Endothelial cell of umbilical vein (primary cell): ENCODE measurements at regions of chr16 and their contacts with region 1.

Region 1: GRCh38 chr16:75110637-75111513 is 5.7 kb downstream of the LDHD start:
- DNase-seq: peak; percentile 85
- H3K4me3 ChIP-seq: no peak overlapping the region
- H3K27ac ChIP-seq: no peak overlapping the region
- H3K4me1 ChIP-seq: peaks cover 12% of the 10 kb centered on the region
- H3K27me3 ChIP-seq: no peaks in the 10 kb centered on the region
- CTCF ChIP-seq: peak; percentile 87 to 95
- POLR2A ChIP-seq: no peak

Region 2: DNA sequence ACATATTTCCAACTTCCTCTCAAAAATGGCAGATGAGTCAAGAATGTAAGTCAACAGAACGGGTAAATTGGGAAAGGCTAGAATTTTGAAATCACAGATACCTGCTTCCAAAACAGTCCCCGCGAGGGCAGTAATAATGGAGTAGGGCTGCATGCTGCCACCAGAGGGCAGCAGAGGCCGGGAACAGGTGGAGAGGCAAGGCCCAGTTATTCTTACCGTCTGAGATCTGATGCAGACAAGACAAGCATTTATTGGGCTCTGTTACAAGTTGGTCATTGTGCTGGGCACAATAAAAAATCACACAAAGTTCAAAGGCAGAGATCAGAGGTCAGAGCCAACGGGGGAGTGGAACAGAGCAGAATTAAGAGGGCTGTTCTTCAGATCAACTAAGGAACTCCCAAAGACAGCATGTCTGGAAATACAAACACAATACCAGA is 401.4 kb before region 1 on chr16:
- CTCF ChIA-PET with region 1: no interaction called
- POLR2A ChIA-PET with region 1: no interaction called
- dilution Hi-C with region 1: no loop called
- intact Hi-C with region 1: loop called (anchors 1 kb)
- DNase-seq: peak; percentile 82
- H3K4me3 ChIP-seq: no peak overlapping the region
- H3K27ac ChIP-seq: no peak overlapping the region
- H3K4me1 ChIP-seq: no peaks in the 10 kb centered on the region
- H3K27me3 ChIP-seq: no peaks in the 10 kb centered on the region
- CTCF ChIP-seq: peak; percentile 94 to 96
- POLR2A ChIP-seq: no peak

Region 3: GRCh38 chr16:74862741-74863244 is 248.1 kb before region 1 on chr16:
- CTCF ChIA-PET with region 1: interaction called, 22 read pairs
- POLR2A ChIA-PET with region 1: no interaction called
- dilution Hi-C with region 1: no loop called
- intact Hi-C with region 1: no loop called
- DNase-seq: peak; percentile 61
- H3K4me3 ChIP-seq: no peak overlapping the region
- H3K27ac ChIP-seq: no peak overlapping the region
- H3K4me1 ChIP-seq: peaks cover 3% of the 10 kb centered on the region
- H3K27me3 ChIP-seq: peaks cover 0 to 1% of the 10 kb centered on the region in 2 experiments
- CTCF ChIP-seq: peak; percentile 54 to 59
- POLR2A ChIP-seq: no peak

Region 4: GRCh38 chr16:74936902-74937560 is 173.8 kb before region 1 on chr16:
- CTCF ChIA-PET with region 1: interaction called, 10 read pairs
- POLR2A ChIA-PET with region 1: no interaction called
- dilution Hi-C with region 1: no loop called
- intact Hi-C with region 1: no loop called
- DNase-seq: no peak
- H3K4me3 ChIP-seq: no peak overlapping the region
- H3K27ac ChIP-seq: no peak overlapping the region
- H3K4me1 ChIP-seq: no peaks in the 10 kb centered on the region
- H3K27me3 ChIP-seq: no peaks in the 10 kb centered on the region
- CTCF ChIP-seq: no peak
- POLR2A ChIP-seq: no peak

Region 5: GRCh38 chr16:74991593-74992403 is 119.1 kb before region 1 on chr16:
- CTCF ChIA-PET with region 1: interaction called, 317 read pairs
- POLR2A ChIA-PET with region 1: no interaction called
- dilution Hi-C with region 1: no loop called
- intact Hi-C with region 1: no loop called
- DNase-seq: no peak
- H3K4me3 ChIP-seq: no peak overlapping the region
- H3K27ac ChIP-seq: no peak overlapping the region
- H3K4me1 ChIP-seq: no peaks in the 10 kb centered on the region
- H3K27me3 ChIP-seq: peaks cover 0 to 4% of the 10 kb centered on the region in 2 experiments
- CTCF ChIP-seq: no peak
- POLR2A ChIP-seq: no peak

Region 6: GRCh38 chr16:75011634-75012307 is 99.1 kb before region 1 on chr16:
- CTCF ChIA-PET with region 1: interaction called, 28 read pairs
- POLR2A ChIA-PET with region 1: no interaction called
- dilution Hi-C with region 1: no loop called
- intact Hi-C with region 1: no loop called
- DNase-seq: peak; percentile 89
- H3K4me3 ChIP-seq: peak overlapping the region in 1 of 3 experiments; percentile 34
- H3K27ac ChIP-seq: peak overlapping the region; percentile 92
- H3K4me1 ChIP-seq: peaks cover 32% of the 10 kb centered on the region
- H3K27me3 ChIP-seq: no peaks in the 10 kb centered on the region
- CTCF ChIP-seq: no peak
- POLR2A ChIP-seq: no peak

Region 7: GRCh38 chr16:75087375-75087979 is 23.4 kb before region 1 on chr16:
- CTCF ChIA-PET with region 1: interaction called, 28 read pairs
- POLR2A ChIA-PET with region 1: no interaction called
- dilution Hi-C with region 1: no loop called
- intact Hi-C with region 1: loop called (anchors 1 kb)
- DNase-seq: peak; percentile 96
- H3K4me3 ChIP-seq: no peak overlapping the region
- H3K27ac ChIP-seq: peak overlapping the region; percentile 45
- H3K4me1 ChIP-seq: peaks cover 26% of the 10 kb centered on the region
- H3K27me3 ChIP-seq: no peaks in the 10 kb centered on the region
- CTCF ChIP-seq: no peak
- POLR2A ChIP-seq: peak; percentile 71